Heart left ventricle (tissue), 16 donors: ENCODE measurements at regions of chr3 and their contacts with region 1.

Region 1: GRCh38 chr3:127697551-127698240 is 24.9 kb downstream of the ABTB1 start:
- DNase-seq: peak; percentile 87 to 93 (median 88)
- ATAC-seq: peak; percentile 68 to 77 (median 74)
- H3K4me3 ChIP-seq: peak overlapping the region in 5 of 12 donors; percentile 7 to 30 (median 19)
- H3K27ac ChIP-seq: peak overlapping the region; percentile 88 to 98 (median 93)
- H3K4me1 ChIP-seq: peaks cover 17 to 89% (median 67%) of the 10 kb centered on the region in 12 donors
- H3K27me3 ChIP-seq: no peaks in the 10 kb centered on the region
- CTCF ChIP-seq: no peak
- POLR2A ChIP-seq: no peak

Region 2: DNA sequence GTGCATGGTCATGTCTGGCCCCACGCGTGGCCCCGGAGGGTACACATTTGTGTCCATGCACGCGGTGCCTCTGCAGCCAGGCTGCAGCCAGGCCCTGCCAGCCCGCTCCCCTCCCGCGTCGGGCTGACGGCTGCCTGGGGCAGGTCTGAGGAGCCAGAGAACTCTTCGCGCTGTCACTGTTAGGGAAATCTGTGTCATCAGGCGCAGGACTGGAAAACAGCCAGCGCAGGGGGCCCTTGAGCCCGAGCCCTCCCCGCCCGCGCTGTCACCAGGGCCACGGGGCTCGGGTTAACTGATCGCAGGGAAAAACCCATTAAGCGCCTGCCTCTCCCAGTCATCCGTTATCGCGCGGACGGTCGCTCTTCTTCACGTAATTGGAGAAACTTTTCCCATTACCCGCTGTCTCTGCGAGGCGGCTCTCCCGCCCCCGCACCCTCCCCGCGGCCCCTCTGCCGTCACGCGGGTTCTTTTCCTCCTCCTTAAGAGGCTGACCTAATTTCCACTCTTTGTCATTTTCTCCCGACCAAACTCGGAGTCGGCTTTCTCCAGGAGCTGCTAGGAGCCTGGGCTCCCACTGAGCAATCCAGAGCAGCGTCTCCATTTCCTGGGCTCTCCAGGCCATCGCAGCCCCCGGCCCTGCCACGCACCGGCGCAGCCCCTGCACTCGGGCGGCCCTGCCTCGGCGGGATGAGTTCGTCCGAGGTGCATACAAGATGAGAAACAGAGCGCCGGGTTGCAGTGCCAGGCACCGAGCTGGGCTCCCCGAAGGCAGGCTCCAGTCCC is 562.3 kb before region 1 on chr3:
- intact Hi-C with region 1: no loop called
- DNase-seq: peak; percentile 33 to 66 (median 63)
- ATAC-seq: peak in 3 of 4 donors; percentile 3 to 23 (median 6)
- H3K4me3 ChIP-seq: peak overlapping the region in 10 of 12 donors; percentile 4 to 53 (median 38)
- H3K27ac ChIP-seq: peak overlapping the region in 10 of 12 donors; percentile 34 to 85 (median 60)
- H3K4me1 ChIP-seq: peaks cover 0 to 52% (median 20%) of the 10 kb centered on the region in 12 donors
- H3K27me3 ChIP-seq: peaks cover 0 to 18% (median 0%) of the 10 kb centered on the region in 9 donors
- CTCF ChIP-seq: no peak
- POLR2A ChIP-seq: no peak

Region 3: DNA sequence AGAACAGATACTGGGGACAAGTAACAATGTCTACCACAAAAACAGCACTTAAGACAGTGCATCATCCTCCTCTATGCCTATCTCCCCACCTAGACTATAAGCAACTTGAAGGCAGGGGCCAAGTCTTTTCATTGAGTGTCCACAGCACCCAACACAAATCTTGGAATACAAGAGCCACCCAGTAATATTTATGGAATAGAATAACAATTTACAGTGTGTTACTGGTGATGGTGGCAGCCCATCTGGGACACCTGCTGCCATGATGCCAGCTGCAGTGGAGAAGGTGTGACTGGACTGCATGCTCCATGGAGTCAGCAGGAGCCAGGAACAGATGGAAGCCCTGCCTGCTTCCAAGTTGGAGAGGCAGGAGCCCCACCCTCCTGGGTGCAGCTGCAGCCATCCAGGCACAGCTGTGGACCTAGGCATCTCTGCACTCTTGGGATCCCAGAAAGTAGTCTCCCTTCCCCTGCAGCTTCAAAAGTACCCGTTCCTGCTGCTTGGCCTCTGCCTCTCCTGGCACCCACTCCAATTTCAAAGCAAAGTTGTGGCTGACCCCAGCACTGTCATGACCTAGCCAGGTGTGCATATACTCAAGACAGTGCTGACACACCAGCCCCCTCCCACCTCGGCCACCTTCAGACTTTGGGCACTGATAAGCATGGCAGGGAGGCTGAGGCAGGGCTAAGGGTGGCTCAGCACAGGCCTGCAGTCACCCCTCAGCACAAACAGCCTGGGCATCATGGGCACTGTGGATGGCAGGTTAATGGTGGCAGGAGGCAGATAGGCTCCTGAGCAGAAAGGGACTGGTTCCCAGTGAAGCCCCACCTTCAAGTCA is 201.7 kb before region 1 on chr3:
- intact Hi-C with region 1: no loop called
- DNase-seq: no peak
- ATAC-seq: no peak
- H3K4me3 ChIP-seq: no peak overlapping the region
- H3K27ac ChIP-seq: no peak overlapping the region
- H3K4me1 ChIP-seq: no peaks in the 10 kb centered on the region
- H3K27me3 ChIP-seq: peaks cover 0 to 4% (median 0%) of the 10 kb centered on the region in 9 donors
- CTCF ChIP-seq: no peak
- POLR2A ChIP-seq: no peak

Region 4: DNA sequence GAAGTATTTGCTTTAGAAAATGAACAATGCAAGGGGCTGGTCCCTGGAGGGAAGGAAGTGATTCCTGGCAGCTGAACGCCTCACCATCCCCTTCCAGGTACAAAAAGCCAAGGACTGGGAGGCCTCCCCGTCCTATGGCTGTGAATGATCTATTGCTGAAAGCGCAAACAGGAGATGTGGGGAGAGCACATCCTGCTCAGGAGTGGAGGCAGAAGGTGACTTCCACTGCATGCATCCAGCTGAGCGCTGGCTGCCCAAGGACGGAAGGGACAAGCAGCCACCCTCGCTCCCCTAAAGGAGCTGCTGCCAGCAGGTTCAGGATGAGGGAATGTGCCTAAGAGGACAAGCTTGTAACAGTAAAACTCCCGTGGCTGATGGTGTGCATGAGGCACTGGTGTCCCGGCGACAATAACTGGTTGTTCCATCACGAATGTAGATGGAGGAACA is 16.5 kb after region 1 on chr3:
- intact Hi-C with region 1: loop called in 1 of 10 experiments (anchors 2 kb)
- DNase-seq: peak in 3 of 5 donors; percentile 58 to 69 (median 62)
- ATAC-seq: peak; percentile 61 to 87 (median 66)
- H3K4me3 ChIP-seq: no peak overlapping the region
- H3K27ac ChIP-seq: peak overlapping the region; percentile 59 to 95 (median 78)
- H3K4me1 ChIP-seq: peaks cover 11 to 99% (median 72%) of the 10 kb centered on the region in 12 donors
- H3K27me3 ChIP-seq: no peaks in the 10 kb centered on the region
- CTCF ChIP-seq: no peak
- POLR2A ChIP-seq: no peak

Region 5: GRCh38 chr3:127739347-127740135 is 41.8 kb after region 1 on chr3:
- intact Hi-C with region 1: loop called in 3 of 10 experiments (anchors 1 to 2 kb)
- DNase-seq: peak in 1 of 5 donors; percentile 11
- ATAC-seq: no peak
- H3K4me3 ChIP-seq: no peak overlapping the region
- H3K27ac ChIP-seq: peak overlapping the region; percentile 73 to 95 (median 87)
- H3K4me1 ChIP-seq: peaks cover 19 to 100% (median 90%) of the 10 kb centered on the region in 12 donors
- H3K27me3 ChIP-seq: no peaks in the 10 kb centered on the region
- CTCF ChIP-seq: no peak
- POLR2A ChIP-seq: no peak

Region 6: GRCh38 chr3:127750226-127751031 is 52.7 kb after region 1 on chr3:
- intact Hi-C with region 1: loop called in 7 of 10 experiments (anchors 1 to 5 kb)
- DNase-seq: peak in 1 of 5 donors; percentile 23
- ATAC-seq: no peak
- H3K4me3 ChIP-seq: no peak overlapping the region
- H3K27ac ChIP-seq: peak overlapping the region; percentile 27 to 95 (median 86)
- H3K4me1 ChIP-seq: peaks cover 6 to 74% (median 56%) of the 10 kb centered on the region in 12 donors
- H3K27me3 ChIP-seq: no peaks in the 10 kb centered on the region
- CTCF ChIP-seq: no peak
- POLR2A ChIP-seq: no peak